Activated CD4-positive, alpha-beta memory T cell treated with anti-CD3 and anti-CD28 coated beads for 36 hours (primary cell): ENCODE measurements at regions of chr14 and their contacts with region 1.

Region 1: GRCh38 chr14:76941946-76942805 is 86.3 kb downstream of the IRF2BPL start:
- DNase-seq: peak; percentile 50
- H3K4me3 Mint-ChIP-seq: no peak overlapping the region
- H3K27ac Mint-ChIP-seq: peak overlapping the region; percentile 67
- H3K4me1 Mint-ChIP-seq: peaks cover 24% of the 10 kb centered on the region
- H3K27me3 Mint-ChIP-seq: no peaks in the 10 kb centered on the region

Region 2: DNA sequence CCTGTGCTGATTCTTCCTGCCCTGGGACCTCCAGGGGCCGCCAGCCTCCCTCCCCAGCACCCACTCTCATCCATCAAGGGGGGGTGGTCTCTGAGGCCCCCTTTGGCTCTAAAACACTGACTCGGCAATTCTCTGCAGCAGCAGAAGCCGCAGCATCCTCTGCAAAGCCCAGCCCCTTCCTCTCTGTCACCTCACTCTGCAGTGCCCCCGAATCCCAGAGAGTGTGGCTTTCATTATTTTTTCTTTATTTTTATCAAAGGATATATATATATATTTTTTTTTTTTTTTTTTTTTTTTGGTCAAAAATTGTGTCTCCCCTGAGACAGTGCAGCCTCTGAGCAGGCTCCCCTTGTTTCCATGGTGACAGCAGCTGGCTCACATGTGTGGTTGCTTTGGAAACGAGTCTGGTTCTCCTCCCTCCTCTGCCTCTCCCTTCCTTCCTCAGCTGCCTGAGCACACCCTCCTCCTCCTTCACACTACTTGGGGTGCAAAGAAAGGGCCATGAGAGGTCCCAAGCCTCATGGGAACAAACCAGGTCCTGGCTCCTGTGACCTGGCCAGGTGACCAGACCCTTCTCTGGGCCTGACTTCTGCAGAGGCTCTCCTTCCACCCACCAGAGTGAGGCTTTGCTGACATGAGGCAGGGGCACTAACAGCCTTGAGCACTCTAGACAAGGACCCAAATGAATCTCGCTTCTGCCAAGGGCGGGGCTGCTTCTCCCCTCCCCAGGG is 15.5 kb before region 1 on chr14:
- CTCF ChIA-PET with region 1: interaction called, 11 read pairs
- POLR2A ChIA-PET with region 1: interaction called, 3 read pairs
- intact Hi-C with region 1: loop called (anchors 2 kb)
- DNase-seq: peak; percentile 75
- H3K4me3 Mint-ChIP-seq: peak overlapping the region; percentile 26
- H3K27ac Mint-ChIP-seq: peak overlapping the region; percentile 54
- H3K4me1 Mint-ChIP-seq: peaks cover 70% of the 10 kb centered on the region
- H3K27me3 Mint-ChIP-seq: no peaks in the 10 kb centered on the region